PC-3 (cell line): ENCODE measurements at regions of chr9 and their contacts with region 1.

Region 1: DNA sequence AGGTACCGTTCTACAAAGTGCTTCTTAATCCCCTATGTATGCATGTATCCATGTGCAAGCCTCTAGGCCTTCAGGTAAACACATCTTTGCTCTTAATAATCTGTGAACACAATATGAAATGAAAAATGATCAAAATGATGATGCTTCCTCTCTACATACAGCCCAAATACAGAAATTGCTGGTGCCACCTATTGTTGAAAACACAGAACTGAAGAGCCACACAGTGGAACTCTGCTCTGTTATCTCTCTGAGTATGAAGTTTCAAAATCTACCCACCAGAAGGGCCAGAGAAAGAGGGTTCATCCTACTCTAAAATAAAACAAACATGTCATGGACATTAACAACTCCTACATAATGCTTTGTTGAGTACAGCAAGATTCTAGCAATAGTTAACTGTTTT is 71.3 kb downstream of the GLIS3 start:
- DNase-seq: peak; percentile 51
- ATAC-seq: peak; percentile 74
- H3K4me3 ChIP-seq: no peak overlapping the region
- H3K27ac ChIP-seq: peak overlapping the region; percentile 11; the same call in 1 of the 2 replicates
- H3K4me1 ChIP-seq: peaks cover 35% of the 10 kb centered on the region
- H3K27me3 ChIP-seq: no peaks in the 10 kb centered on the region
- CTCF ChIP-seq: peak; percentile 71

Region 2: GRCh38 chr9:3467593-3468219 is 760.9 kb before region 1 on chr9:
- CTCF ChIA-PET with region 1: no interaction called
- POLR2A ChIA-PET with region 1: no interaction called
- intact Hi-C with region 1: loop called (anchors 10 kb)
- DNase-seq: peak; percentile 55
- ATAC-seq: peak; percentile 94
- H3K4me3 ChIP-seq: no peak overlapping the region
- H3K27ac ChIP-seq: no peak overlapping the region
- H3K4me1 ChIP-seq: 0 out of 2 replicates have a peak, but pooled peaks cover 3% of the 10 kb centered on the region
- H3K27me3 ChIP-seq: no peaks in the 10 kb centered on the region
- CTCF ChIP-seq: peak; percentile 89

Region 3: DNA sequence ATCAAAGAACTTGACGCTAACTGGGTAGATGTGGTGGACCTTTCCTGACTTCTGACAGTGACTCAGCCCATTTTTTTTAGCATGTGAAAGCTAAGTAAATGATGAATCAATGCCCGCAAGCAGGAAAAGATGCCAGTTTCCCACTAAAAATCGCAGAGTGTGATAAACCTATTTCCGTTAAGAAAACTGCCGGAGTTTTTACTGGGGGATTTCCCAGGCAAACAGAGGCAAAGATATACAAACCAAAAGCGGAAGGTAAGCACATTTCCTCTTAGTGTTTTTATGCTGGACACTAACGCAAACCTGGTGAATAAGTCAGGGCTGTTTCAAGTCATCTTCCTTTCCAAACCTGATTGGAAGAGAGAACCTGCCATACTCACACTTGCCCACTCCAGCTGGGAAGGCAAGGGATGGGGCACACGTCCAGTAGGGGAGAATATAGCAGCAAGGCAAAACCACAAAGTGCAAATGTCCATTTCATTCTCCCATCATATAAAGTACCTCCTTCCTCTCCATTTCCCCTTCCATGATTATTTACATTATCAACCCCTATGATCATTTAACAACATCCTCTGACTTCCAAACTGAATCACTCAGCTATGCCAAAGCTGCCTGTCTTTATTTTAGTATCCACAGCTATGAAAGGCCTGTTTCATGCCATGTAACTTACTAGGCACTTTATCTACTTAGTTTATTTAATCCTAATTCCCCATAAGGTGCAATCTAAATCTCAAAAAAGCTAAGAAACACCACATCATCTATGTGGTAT is 353.1 kb before region 1 on chr9:
- CTCF ChIA-PET with region 1: no interaction called
- POLR2A ChIA-PET with region 1: no interaction called
- intact Hi-C with region 1: loop called (anchors 5 kb)
- DNase-seq: peak; percentile 97
- ATAC-seq: peak; percentile 76
- H3K4me3 ChIP-seq: peak overlapping the region; percentile 10; the same call in 1 of the 2 replicates
- H3K27ac ChIP-seq: peak overlapping the region; percentile 99
- H3K4me1 ChIP-seq: peaks cover 35% of the 10 kb centered on the region
- H3K27me3 ChIP-seq: no peaks in the 10 kb centered on the region
- CTCF ChIP-seq: no peak

Region 4: DNA sequence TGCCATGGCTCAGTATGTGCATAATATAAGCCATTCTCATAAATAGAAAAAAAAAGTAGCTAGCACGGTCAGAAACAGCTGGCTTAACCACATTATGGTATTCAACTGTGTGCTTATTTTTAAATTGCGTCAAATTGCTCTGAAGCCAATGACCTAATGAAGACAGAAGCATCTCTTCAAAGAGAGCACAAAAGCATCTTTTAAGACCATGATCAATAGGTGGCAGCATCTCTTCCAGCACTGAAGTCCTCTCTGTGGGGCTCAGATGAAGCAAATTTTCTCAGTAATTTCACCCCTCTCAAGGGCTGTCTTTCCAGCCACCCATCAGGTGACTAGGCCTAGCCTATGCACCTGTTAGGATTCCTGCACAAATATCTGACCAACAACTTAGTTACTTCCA is 180.2 kb before region 1 on chr9:
- CTCF ChIA-PET with region 1: no interaction called
- POLR2A ChIA-PET with region 1: no interaction called
- intact Hi-C with region 1: loop called (anchors 5 kb)
- DNase-seq: peak; percentile 56
- ATAC-seq: peak; percentile 60
- H3K4me3 ChIP-seq: no peak overlapping the region
- H3K27ac ChIP-seq: no peak overlapping the region
- H3K4me1 ChIP-seq: no peaks in the 10 kb centered on the region
- H3K27me3 ChIP-seq: no peaks in the 10 kb centered on the region
- CTCF ChIP-seq: peak; percentile 62; the same call in 1 of the 2 replicates

Region 5: GRCh38 chr9:4077499-4078102 is 151.0 kb before region 1 on chr9:
- CTCF ChIA-PET with region 1: no interaction called
- POLR2A ChIA-PET with region 1: no interaction called
- intact Hi-C with region 1: loop called (anchors 10 kb)
- DNase-seq: peak; percentile 72
- ATAC-seq: peak; percentile 73
- H3K4me3 ChIP-seq: no peak overlapping the region
- H3K27ac ChIP-seq: peak overlapping the region; percentile 21
- H3K4me1 ChIP-seq: peaks cover 12% of the 10 kb centered on the region
- H3K27me3 ChIP-seq: no peaks in the 10 kb centered on the region
- CTCF ChIP-seq: peak; percentile 77

Region 6: GRCh38 chr9:4143936-4144717 is 84.5 kb before region 1 on chr9:
- CTCF ChIA-PET with region 1: no interaction called
- POLR2A ChIA-PET with region 1: no interaction called
- intact Hi-C with region 1: loop called (anchors 5 kb)
- DNase-seq: peak; percentile 76
- ATAC-seq: peak; percentile 65
- H3K4me3 ChIP-seq: peak overlapping the region; percentile 30; the same call in 1 of the 2 replicates
- H3K27ac ChIP-seq: peak overlapping the region; percentile 68
- H3K4me1 ChIP-seq: peaks cover 35% of the 10 kb centered on the region
- H3K27me3 ChIP-seq: no peaks in the 10 kb centered on the region
- CTCF ChIP-seq: no peak

Region 7: DNA sequence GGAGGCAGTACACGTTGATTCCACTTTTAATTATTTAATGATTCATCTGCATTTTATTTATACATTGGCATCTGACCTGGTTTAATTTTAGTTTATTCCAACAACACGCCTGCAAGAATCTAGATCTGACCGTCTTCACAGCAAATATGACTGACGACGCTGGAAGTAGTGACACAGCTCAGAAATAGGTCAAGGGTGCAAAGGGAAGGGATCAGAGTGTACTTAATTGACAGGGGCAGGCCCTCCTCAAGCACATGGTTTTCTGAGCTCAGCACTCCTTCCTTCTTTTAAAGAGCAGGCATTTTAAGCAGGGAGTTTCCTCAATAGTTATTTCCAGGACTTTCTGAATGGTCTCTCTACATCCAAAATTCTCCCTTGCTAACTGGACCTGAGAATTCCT is 53.8 kb before region 1 on chr9:
- CTCF ChIA-PET with region 1: no interaction called
- POLR2A ChIA-PET with region 1: no interaction called
- intact Hi-C with region 1: loop called (anchors 10 kb)
- DNase-seq: peak; percentile 54
- ATAC-seq: peak; percentile 90
- H3K4me3 ChIP-seq: peak overlapping the region; percentile 35; the same call in 1 of the 2 replicates
- H3K27ac ChIP-seq: peak overlapping the region; percentile 74
- H3K4me1 ChIP-seq: peaks cover 20% of the 10 kb centered on the region
- H3K27me3 ChIP-seq: no peaks in the 10 kb centered on the region
- CTCF ChIP-seq: no peak

Region 8: DNA sequence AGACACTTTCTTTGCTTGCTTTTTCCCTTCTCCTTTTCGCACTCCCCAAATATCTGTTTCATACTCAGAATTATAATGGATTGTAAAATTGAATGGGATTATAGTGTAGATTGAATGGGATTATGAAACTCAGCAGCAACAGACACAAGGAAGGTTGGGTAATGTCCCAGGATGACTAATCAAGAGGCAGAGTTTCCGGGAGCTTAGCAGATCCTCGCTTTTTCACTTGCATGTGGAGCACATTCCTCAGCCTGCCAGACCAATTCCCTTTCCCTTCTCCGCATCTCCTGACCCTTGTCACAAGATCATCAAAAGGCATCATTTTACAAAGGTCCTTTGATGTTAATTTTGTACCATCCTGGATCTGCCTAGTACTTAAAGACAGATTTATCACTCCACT is 206.6 kb after region 1 on chr9:
- CTCF ChIA-PET with region 1: no interaction called
- POLR2A ChIA-PET with region 1: no interaction called
- intact Hi-C with region 1: no loop called
- DNase-seq: no peak
- ATAC-seq: no peak
- H3K4me3 ChIP-seq: no peak overlapping the region
- H3K27ac ChIP-seq: no peak overlapping the region
- H3K4me1 ChIP-seq: peaks cover 6% of the 10 kb centered on the region; the same call in 1 of the 2 replicates
- H3K27me3 ChIP-seq: no peaks in the 10 kb centered on the region
- CTCF ChIP-seq: no peak